ENCODE measurements at regions of chr4 and their contacts with region 1.

Region 1: GRCh38 chr4:39527273-39528060 is at the start of gene UGDH:
- DNase-seq: peak; percentile 93
- H3K4me3 ChIP-seq: peak within 1 kb of the TSS; percentile 93
- CTCF ChIP-seq: no peak

Region 2: GRCh38 chr4:39436218-39436560 is 91.3 kb before region 1 on chr4:
- CTCF ChIA-PET with region 1: no interaction called
- POLR2A ChIA-PET with region 1: no interaction called
- DNase-seq: no peak
- H3K4me3 ChIP-seq: no peak overlapping the region
- CTCF ChIP-seq: no peak

Region 3: DNA sequence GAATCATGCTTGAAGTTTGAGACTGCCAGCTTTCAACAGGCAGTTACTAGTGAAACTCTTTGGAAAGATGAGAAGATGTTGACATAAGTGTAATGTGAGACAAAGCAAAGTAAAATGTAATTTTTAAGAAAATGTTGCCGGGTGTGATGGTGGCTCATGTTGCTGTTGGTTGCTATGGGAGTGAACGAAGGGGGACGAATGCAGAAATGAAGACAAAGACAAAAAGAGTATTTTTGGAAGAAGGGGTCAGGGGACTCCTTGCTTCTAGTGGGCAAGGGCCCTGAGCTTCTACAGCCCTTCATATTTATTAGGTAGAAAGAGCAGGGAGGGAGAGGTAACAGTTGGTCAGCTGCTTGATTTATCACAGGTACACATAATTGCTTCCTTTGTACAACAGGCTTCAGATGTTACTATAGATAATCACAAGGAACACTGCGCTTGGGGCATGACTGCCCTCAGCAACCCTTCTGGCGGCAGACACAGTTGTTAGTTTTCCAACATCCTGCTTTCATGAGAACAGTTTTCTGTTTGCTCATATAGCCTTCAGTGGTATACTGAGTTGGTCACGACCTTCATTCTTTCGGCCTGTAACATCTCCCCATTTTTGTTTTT is 11.7 kb after region 1 on chr4:
- CTCF ChIA-PET with region 1: interaction called, 3 read pairs
- POLR2A ChIA-PET with region 1: interaction called, 11 read pairs
- DNase-seq: no peak
- H3K4me3 ChIP-seq: no peak overlapping the region
- CTCF ChIP-seq: no peak

Region 4: GRCh38 chr4:39621582-39621981 is 94.1 kb after region 1 on chr4:
- CTCF ChIA-PET with region 1: no interaction called
- POLR2A ChIA-PET with region 1: interaction called, 10 read pairs
- DNase-seq: no peak
- H3K4me3 ChIP-seq: no peak overlapping the region
- CTCF ChIP-seq: no peak

Region 5: DNA sequence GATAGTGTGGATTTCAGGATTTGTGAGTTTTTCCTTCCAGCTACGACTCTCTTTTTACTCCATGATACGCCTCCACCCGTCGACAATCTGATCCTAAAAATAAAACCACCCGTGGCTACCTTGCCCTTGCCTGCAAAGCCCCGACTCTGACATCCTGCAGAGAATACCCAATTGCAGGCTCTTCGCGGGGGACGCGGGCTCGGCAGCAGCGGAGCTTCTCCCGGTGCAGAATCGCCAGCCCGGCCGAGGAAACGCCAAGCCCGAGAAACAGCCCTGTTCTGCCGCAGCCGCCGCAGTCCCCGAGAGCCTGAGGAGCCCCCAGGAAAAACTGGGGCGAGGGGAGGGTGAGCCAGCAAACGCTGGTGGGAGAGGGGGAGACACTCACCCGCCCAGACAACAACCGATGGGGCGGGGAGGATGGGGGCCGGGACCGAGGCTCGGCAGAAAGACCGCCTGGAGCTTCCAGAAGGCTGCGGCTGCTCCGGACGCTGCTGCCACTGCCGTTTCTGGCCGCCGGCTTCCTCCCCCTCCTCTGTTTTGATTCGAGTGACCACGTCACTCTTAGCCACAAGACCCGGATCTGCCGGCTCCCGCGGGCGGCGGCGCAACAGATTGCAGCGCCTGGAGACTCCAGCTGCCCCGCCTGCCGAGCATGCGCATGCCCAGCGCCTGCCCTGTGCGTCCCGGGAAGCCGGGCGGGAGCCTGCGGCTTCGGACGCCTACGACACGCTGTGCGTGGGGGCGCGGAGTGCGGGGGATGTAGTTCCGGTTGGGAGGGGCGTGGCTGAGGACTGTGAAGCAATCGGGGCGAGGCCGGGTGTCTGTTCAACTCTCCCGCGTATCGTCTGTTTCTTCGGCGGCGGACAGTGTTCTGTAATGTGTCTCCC is 111.1 kb after region 1 on chr4 and contains the start of gene SMIM14:
- CTCF ChIA-PET with region 1: interaction called, 3 read pairs
- POLR2A ChIA-PET with region 1: interaction called, 87 read pairs
- DNase-seq: peak; percentile 86
- H3K4me3 ChIP-seq: peak within 1 kb of the TSS; percentile 86
- CTCF ChIP-seq: peak; percentile 8

Region 6: GRCh38 chr4:39697740-39698423 is 170.4 kb after region 1 on chr4 and contains the start of gene UBE2K:
- CTCF ChIA-PET with region 1: no interaction called
- POLR2A ChIA-PET with region 1: interaction called, 14 read pairs
- DNase-seq: no peak
- H3K4me3 ChIP-seq: peak within 1 kb of the TSS; percentile 97
- CTCF ChIP-seq: no peak

Measured in AG04449 (cell line).